Transverse colon (tissue), 4 donors: ENCODE measurements at regions of chr7 and their contacts with region 1.

Region 1: GRCh38 chr7:47195641-47196040 is 386.3 kb downstream of the TNS3 start:
- DNase-seq: no peak
- H3K4me3 ChIP-seq: no peak overlapping the region
- H3K27ac ChIP-seq: no peak overlapping the region
- H3K4me1 ChIP-seq: peaks cover 0 to 34% (median 18%) of the 10 kb centered on the region in 4 donors
- H3K27me3 ChIP-seq: no peaks in the 10 kb centered on the region
- CTCF ChIP-seq: peak in 1 of 5 experiments; percentile 18
- EP300 ChIP-seq: no peak
- POLR2A ChIP-seq: no peak

Region 2: GRCh38 chr7:46945328-46945727 is 250.3 kb before region 1 on chr7:
- in situ Hi-C with region 1: no loop called
- intact Hi-C with region 1: no loop called
- DNase-seq: no peak
- H3K4me3 ChIP-seq: no peak overlapping the region
- H3K27ac ChIP-seq: no peak overlapping the region
- H3K4me1 ChIP-seq: no peaks in the 10 kb centered on the region
- H3K27me3 ChIP-seq: no peaks in the 10 kb centered on the region
- CTCF ChIP-seq: no peak
- EP300 ChIP-seq: no peak
- POLR2A ChIP-seq: no peak

Region 3: DNA sequence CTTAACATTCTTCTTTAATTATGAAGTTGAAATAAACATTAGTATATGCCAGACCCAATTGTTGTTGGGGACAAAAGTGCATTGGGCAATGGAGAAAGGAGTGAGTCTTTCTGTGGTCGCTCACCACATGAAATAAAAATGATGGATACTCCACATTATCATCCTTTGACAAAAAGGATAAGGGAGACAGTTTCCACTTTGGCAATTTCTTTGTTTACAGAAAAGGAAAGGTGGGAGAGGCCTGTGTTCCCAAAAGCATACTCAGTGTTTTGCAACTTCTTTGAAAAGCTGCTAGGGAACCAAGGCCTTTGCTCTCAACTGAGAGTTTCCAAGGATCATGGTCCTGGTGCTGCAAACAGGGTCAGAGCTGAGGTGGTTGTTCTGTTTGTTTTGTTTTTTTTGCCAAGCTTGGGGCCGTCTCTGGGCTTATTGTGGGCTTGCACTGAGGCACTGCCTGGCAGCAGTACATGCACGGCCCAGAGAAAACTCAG is 44.3 kb after region 1 on chr7:
- in situ Hi-C with region 1: loop called in 1 of 4 experiments (anchors 10 kb)
- intact Hi-C with region 1: no loop called
- DNase-seq: no peak
- H3K4me3 ChIP-seq: no peak overlapping the region
- H3K27ac ChIP-seq: no peak overlapping the region
- H3K4me1 ChIP-seq: no peaks in the 10 kb centered on the region
- H3K27me3 ChIP-seq: no peaks in the 10 kb centered on the region
- CTCF ChIP-seq: no peak
- EP300 ChIP-seq: no peak
- POLR2A ChIP-seq: no peak